ENCODE measurements at regions of chr15 and their contacts with region 1.

Region 1: GRCh38 chr15:34682673-34683072 is 72.1 kb downstream of the GJD2 start:
- DNase-seq: no peak
- ATAC-seq: no peak
- H3K4me3 ChIP-seq: no peak overlapping the region
- H3K27ac ChIP-seq: no peak overlapping the region
- H3K4me1 ChIP-seq: no peaks in the 10 kb centered on the region
- H3K27me3 ChIP-seq: peaks cover 0 to 4% (median 0%) of the 10 kb centered on the region in 9 donors
- CTCF ChIP-seq: no peak
- POLR2A ChIP-seq: no peak

Region 2: DNA sequence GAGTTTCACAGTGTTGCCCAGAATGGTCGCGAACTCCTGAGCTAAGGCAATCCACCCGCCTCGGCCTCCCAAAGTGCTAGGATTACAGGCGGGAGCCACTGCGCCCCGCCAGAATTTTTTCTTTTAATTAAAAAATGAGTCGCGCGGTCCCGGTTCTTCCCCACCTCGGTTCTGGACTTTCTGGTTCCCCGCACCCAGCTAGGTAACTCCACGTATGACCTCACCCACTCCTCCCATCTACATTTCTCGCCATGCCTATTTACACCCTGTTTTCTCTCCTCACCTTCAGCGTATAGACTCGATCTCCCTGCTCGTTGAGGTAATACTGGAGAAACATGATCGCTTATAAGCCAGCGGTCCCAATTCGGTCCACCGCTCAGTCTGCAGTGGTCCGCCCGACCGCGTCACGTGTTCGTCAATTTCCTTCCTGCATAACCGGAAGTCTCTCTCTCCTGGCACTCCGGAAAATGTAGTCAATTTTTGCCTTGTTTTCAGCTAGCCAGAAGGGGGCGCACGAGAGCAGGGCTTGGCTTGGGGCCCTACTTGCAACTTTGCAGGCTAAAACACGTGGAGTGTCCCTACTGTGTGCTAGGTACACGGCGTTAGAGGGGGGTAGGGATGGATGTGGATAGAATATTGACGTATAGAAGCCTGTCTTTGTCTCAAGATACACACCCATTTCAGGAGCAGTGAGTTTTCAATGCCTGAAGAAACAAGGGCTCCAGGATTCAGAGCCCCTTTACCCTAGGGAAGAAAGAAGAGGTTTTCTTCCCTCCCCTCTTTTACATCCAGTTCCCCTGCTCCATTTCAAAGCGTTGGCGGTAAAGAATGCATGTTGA is 339.7 kb before region 1 on chr15 and contains the starts of genes NOP10 and NUTM1:
- intact Hi-C with region 1: no loop called
- DNase-seq: peak; percentile 91 to 95 (median 92)
- ATAC-seq: peak; percentile 91 to 97 (median 95)
- H3K4me3 ChIP-seq: peak within 1 kb of the TSS; percentile 56 to 94 (median 84)
- H3K27ac ChIP-seq: peak within 1 kb of the TSS; percentile 60 to 96 (median 90)
- H3K4me1 ChIP-seq: peaks cover 0 to 37% (median 15%) of the 10 kb centered on the region in 12 donors
- H3K27me3 ChIP-seq: no peaks in the 10 kb centered on the region
- CTCF ChIP-seq: peak; percentile 87 to 99 (median 96)
- POLR2A ChIP-seq: peak in 1 of 2 donors; percentile 60
- total RNA-seq, gene NOP10: 96.4 to 217 (median 132) TPM
- total RNA-seq, gene NUTM1: not detected

Region 3: GRCh38 chr15:34693053-34693744 is 10.5 kb after region 1 on chr15:
- intact Hi-C with region 1: loop called in 1 of 10 experiments (anchors 2 kb)
- DNase-seq: no peak
- ATAC-seq: no peak
- H3K4me3 ChIP-seq: no peak overlapping the region
- H3K27ac ChIP-seq: no peak overlapping the region
- H3K4me1 ChIP-seq: no peaks in the 10 kb centered on the region
- H3K27me3 ChIP-seq: no peaks in the 10 kb centered on the region
- CTCF ChIP-seq: no peak
- POLR2A ChIP-seq: no peak

Region 4: DNA sequence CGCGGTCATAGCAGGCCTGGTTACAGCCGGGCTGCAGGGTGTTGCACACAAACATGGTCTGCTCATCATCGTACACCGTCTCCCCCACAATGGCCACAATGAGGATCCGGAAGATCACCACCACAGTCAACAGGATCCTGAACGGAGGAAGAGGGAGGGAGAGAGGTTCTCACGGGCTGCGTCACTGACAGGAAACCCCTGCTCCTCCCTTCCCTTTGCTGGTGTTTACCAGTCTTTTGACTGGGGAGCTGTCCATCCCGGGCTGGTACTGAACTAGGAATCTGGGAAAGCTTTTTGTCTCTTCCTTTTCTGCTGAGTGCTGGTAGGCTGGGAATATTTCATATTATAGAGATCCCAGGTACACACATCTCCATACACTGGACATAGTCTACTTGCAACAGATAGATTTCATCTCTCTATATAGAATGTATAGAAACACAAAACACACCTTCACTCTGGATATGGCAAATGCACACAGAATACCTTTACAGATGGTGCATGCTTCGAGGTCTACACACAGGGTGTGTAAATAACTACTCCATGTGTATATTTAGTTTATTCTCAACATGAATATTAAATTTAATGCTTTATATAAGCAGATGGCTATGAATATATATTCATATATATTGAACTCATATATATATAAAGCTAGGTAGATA is 70.7 kb after region 1 on chr15:
- intact Hi-C with region 1: loop called in 1 of 10 experiments (anchors 10 kb)
- DNase-seq: peak in 3 of 5 donors; percentile 16 to 34 (median 25)
- ATAC-seq: peak; percentile 30 to 57 (median 42)
- H3K4me3 ChIP-seq: no peak overlapping the region
- H3K27ac ChIP-seq: no peak overlapping the region
- H3K4me1 ChIP-seq: peaks cover 0 to 15% (median 0%) of the 10 kb centered on the region in 12 donors
- H3K27me3 ChIP-seq: peaks cover 5 to 64% (median 34%) of the 10 kb centered on the region in 9 donors
- CTCF ChIP-seq: no peak
- POLR2A ChIP-seq: no peak

Measured in heart left ventricle (tissue), 16 donors.